HCT116 (cell line): ENCODE measurements at regions of chr11 and their contacts with region 1.

Region 1: GRCh38 chr11:79400717-79401686 is 39.8 kb downstream of the TENM4 start:
- DNase-seq: no peak
- ATAC-seq: peak; percentile 60; the same call in 1 of the 2 replicates
- H3K4me3 ChIP-seq: no peak overlapping the region
- H3K27ac ChIP-seq: no peak overlapping the region
- H3K4me1 ChIP-seq: no peaks in the 10 kb centered on the region
- H3K27me3 ChIP-seq: no peaks in the 10 kb centered on the region
- CTCF ChIP-seq: peak; percentile 37 to 68 (median 67); a peak in 5 of 6 replicates
- POLR2A ChIP-seq: no peak
- RAD21 ChIP-seq: peak; percentile 48; the same call in 1 of the 2 replicates

Region 2: GRCh38 chr11:79419120-79419519 is 18.1 kb after region 1 on chr11:
- CTCF ChIA-PET with region 1: interaction called, 5 read pairs
- POLR2A ChIA-PET with region 1: no interaction called
- RAD21 ChIA-PET with region 1: no interaction called
- intact Hi-C with region 1: loop called (anchors 1 kb)
- DNase-seq: peak; percentile 50
- ATAC-seq: peak; percentile 89
- H3K4me3 ChIP-seq: no peak overlapping the region
- H3K27ac ChIP-seq: no peak overlapping the region
- H3K4me1 ChIP-seq: peaks cover 3 to 26% of the 10 kb centered on the region in 2 experiments; a peak in 3 of 4 replicates
- H3K27me3 ChIP-seq: no peaks in the 10 kb centered on the region
- CTCF ChIP-seq: no peak
- POLR2A ChIP-seq: no peak
- RAD21 ChIP-seq: no peak

Region 3: DNA sequence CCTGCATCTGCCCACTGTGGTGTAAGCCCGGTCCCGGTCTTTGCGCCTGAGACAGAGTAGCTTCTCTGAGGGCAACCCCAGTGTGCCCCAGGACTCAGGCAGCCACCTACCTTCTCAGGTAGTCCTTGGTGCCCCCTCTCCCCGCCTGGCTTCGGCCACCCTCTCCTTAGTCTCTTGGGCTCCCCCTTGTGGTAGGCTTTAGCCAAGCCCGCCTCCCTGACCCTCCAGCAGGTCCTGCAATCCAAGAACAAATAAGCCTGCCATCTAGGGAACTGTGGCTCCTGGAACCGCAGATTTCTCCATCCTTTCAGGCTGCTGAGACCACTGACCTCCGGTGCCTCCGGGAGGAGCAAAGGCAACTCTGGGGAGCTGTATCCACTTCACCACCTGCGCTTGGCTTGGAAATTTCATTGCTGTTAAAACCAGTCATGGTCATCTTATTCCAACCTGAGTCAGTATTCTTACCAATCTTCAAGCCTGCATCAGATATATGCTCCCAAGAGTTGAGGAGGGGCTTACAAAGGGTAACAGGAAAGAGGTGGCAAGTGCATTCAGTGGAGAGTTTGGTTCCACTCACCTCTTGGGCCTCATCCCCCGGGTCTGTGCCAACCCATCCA is 92.7 kb after region 1 on chr11:
- CTCF ChIA-PET with region 1: interaction called, 7 read pairs
- POLR2A ChIA-PET with region 1: no interaction called
- RAD21 ChIA-PET with region 1: no interaction called
- intact Hi-C with region 1: loop called (anchors 2 kb)
- DNase-seq: peak; percentile 19
- ATAC-seq: peak; percentile 92
- H3K4me3 ChIP-seq: no peak overlapping the region
- H3K27ac ChIP-seq: no peak overlapping the region
- H3K4me1 ChIP-seq: no peaks in the 10 kb centered on the region
- H3K27me3 ChIP-seq: no peaks in the 10 kb centered on the region
- CTCF ChIP-seq: peak; percentile 35 to 78 (median 78); a peak in 5 of 6 replicates
- POLR2A ChIP-seq: no peak
- RAD21 ChIP-seq: peak; percentile 49